ENCODE measurements at regions of chr12 and their contacts with region 1.

Region 1: DNA sequence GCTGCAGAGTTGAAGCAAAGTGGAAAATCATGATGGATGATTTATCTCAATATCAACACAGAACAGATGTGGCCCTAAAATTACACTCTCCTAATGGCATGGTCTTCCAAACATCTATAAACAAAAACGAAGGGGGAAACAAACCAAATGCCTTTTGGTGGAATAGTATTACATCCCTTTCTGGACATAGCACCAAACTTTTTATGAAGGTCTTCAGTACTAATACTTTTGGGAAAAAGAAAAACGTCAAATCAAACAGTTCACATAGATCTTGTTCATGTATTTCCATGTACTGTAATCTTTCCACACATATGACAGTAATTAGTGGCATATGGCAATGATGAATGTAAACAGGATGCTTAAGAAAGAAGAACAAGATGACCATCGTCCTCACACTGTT is 22.9 kb upstream of the ANAPC7 start:
- DNase-seq: no peak
- ATAC-seq: no peak
- H3K4me3 ChIP-seq: no peak overlapping the region
- H3K4me3 Mint-ChIP-seq: no peak overlapping the region
- H3K27ac ChIP-seq: no peak overlapping the region
- H3K27ac Mint-ChIP-seq: no peak overlapping the region
- H3K4me1 ChIP-seq: peaks cover 0 to 5% of the 10 kb centered on the region in 2 donors
- H3K4me1 Mint-ChIP-seq: peaks cover 2% of the 10 kb centered on the region
- H3K27me3 ChIP-seq: no peaks in the 10 kb centered on the region
- H3K27me3 Mint-ChIP-seq: peaks cover 4% of the 10 kb centered on the region
- CTCF ChIP-seq: no peak

Region 2: GRCh38 chr12:110056147-110056484 is 370.3 kb before region 1 on chr12:
- CTCF ChIA-PET with region 1: interaction called, 6 read pairs
- POLR2A ChIA-PET with region 1: interaction called, 10 read pairs
- intact Hi-C with region 1: no loop called
- DNase-seq: no peak
- ATAC-seq: no peak
- H3K4me3 ChIP-seq: no peak overlapping the region
- H3K4me3 Mint-ChIP-seq: no peak overlapping the region
- H3K27ac ChIP-seq: no peak overlapping the region
- H3K27ac Mint-ChIP-seq: no peak overlapping the region
- H3K4me1 ChIP-seq: peaks cover 0 to 2% of the 10 kb centered on the region in 2 donors
- H3K4me1 Mint-ChIP-seq: peaks cover under 1% of the 10 kb centered on the region
- H3K27me3 ChIP-seq: no peaks in the 10 kb centered on the region
- H3K27me3 Mint-ChIP-seq: peaks cover 2% of the 10 kb centered on the region
- CTCF ChIP-seq: no peak

Region 3: GRCh38 chr12:110583137-110584059 is 157.0 kb after region 1 on chr12 and contains the start of gene PPTC7:
- CTCF ChIA-PET with region 1: no interaction called
- POLR2A ChIA-PET with region 1: no interaction called
- intact Hi-C with region 1: no loop called
- DNase-seq: peak; percentile 98
- ATAC-seq: peak; percentile 95
- H3K4me3 ChIP-seq: peak within 1 kb of the TSS; percentile 74 to 93 (median 87)
- H3K4me3 Mint-ChIP-seq: peak within 1 kb of the TSS; percentile 94
- H3K27ac ChIP-seq: peak within 1 kb of the TSS; percentile 88 to 96
- H3K27ac Mint-ChIP-seq: peak within 1 kb of the TSS; percentile 92
- H3K4me1 ChIP-seq: peaks cover 55 to 64% of the 10 kb centered on the region in 2 donors
- H3K4me1 Mint-ChIP-seq: peaks cover 69% of the 10 kb centered on the region
- H3K27me3 ChIP-seq: no peaks in the 10 kb centered on the region
- H3K27me3 Mint-ChIP-seq: no peaks in the 10 kb centered on the region
- CTCF ChIP-seq: no peak
- total RNA-seq, gene PPTC7: 44.9 and 45.6 TPM in 2 replicates

Region 4: DNA sequence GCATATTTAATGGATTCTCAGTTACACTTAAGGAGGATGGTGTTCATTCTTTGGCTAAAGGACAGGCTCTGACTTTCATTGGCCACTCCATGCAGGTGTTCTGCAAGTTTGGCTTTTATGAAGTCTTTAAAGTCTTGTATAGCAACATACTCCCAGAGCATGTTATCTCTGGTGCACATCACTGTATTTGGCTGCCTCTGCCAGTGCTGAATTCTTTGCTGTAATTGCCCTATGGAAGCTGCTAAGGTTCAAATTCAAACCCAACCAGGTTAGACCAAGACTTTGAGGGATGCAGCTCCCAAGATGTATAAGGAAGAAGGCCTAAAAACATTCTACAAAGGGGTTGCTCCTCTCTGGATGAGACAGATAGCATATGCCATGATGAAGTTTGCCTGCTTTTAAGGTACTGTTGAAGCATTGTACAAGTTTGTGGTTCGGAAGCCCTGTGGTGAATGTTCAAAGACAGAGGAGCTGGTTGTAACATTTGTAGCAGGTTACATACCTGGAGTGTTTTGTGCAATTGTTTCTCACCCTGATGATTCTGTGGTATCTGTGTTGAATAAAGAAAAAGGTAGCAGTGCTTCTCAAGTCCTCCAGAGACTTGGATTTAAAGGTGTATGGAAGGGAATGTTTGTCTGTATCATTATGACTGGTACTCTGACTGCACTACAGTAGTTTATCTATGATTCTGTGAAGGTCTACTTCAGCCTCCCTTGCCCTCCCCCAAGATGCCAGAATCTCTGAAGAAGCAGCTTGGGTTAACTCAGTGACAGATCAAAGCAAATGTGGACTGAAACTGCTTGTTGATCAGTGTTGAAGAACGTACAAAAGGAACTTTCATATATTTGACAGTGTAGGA is 1567.1 kb after region 1 on chr12:
- CTCF ChIA-PET with region 1: no interaction called
- POLR2A ChIA-PET with region 1: no interaction called
- intact Hi-C with region 1: no loop called
- DNase-seq: peak; percentile 16
- ATAC-seq: peak; percentile 10
- H3K4me3 ChIP-seq: peak overlapping the region in 2 of 5 experiments; percentile 7 to 60
- H3K4me3 Mint-ChIP-seq: peak overlapping the region; percentile 91
- H3K27ac ChIP-seq: no peak overlapping the region
- H3K27ac Mint-ChIP-seq: no peak overlapping the region
- H3K4me1 ChIP-seq: peaks cover 42 to 45% of the 10 kb centered on the region in 2 donors
- H3K4me1 Mint-ChIP-seq: peaks cover 42% of the 10 kb centered on the region
- H3K27me3 ChIP-seq: peaks cover 0 to 17% (median 12%) of the 10 kb centered on the region in 4 experiments
- H3K27me3 Mint-ChIP-seq: peaks cover 26% of the 10 kb centered on the region
- CTCF ChIP-seq: no peak